Activated CD4-positive, alpha-beta T cell treated with anti-CD3 and anti-CD28 coated beads for 36 hours (primary cell): ENCODE measurements at regions of chr3 and their contacts with region 1.

Region 1: GRCh38 chr3:187974871-187975271 is 179.1 kb upstream of the LPP start:
- DNase-seq: no peak
- ATAC-seq: peak; percentile 61
- H3K4me3 Mint-ChIP-seq: peak overlapping the region; percentile 57
- H3K27ac Mint-ChIP-seq: peak overlapping the region; percentile 90
- H3K4me1 Mint-ChIP-seq: peaks cover 57% of the 10 kb centered on the region
- H3K27me3 Mint-ChIP-seq: no peaks in the 10 kb centered on the region

Region 2: DNA sequence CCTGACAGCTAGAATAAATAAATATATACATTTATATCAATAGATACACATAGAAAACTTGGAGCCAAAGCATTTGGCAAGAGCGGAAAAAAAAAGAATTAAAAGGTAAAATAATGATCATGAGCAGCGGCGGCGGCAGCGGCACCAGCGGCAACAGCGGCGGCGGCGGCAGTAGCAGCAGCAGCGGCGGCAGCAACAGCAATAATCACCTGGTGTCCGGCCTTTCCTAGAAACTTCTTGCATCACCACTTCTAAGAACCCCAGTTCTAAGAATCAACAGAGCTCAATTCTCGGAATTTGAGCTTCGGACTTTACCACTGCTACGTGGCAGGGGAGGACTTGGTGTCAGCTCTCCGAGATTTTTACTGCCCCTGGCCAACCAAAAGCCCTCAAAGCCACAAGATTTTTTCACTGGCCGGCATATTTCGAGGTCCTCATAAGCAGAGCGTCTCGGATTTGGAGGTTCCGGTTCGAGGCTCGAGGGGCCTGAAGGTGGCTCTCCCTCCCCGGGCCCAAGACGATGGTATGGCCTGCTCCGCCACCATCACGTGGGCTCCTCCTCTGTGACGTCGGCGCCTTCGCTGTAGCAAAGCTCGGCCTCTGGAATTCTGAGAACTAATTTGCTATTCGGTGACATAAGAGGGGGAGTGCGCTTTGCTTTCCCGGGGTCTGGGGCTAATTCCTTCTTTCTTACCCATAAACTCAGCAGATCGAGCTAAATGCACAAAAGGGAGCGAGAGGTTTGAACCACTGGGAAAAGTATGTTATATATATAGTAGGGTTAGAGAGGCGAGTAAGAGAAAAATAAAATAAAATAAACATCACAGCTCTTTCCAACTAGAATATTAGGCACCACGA is 229.4 kb before region 1 on chr3 and contains the start of gene BCL6:
- CTCF ChIA-PET with region 1: interaction called, 23 read pairs
- POLR2A ChIA-PET with region 1: interaction called, 15 read pairs
- intact Hi-C with region 1: loop called (anchors 1 to 2 kb)
- DNase-seq: peak; percentile 92
- ATAC-seq: peak; percentile 50
- H3K4me3 Mint-ChIP-seq: peak within 1 kb of the TSS; percentile 91
- H3K27ac Mint-ChIP-seq: peak within 1 kb of the TSS; percentile 99
- H3K4me1 Mint-ChIP-seq: peaks cover 63% of the 10 kb centered on the region
- H3K27me3 Mint-ChIP-seq: no peaks in the 10 kb centered on the region
- total RNA-seq, gene BCL6: 42.9 to 52.8 TPM

Region 3: DNA sequence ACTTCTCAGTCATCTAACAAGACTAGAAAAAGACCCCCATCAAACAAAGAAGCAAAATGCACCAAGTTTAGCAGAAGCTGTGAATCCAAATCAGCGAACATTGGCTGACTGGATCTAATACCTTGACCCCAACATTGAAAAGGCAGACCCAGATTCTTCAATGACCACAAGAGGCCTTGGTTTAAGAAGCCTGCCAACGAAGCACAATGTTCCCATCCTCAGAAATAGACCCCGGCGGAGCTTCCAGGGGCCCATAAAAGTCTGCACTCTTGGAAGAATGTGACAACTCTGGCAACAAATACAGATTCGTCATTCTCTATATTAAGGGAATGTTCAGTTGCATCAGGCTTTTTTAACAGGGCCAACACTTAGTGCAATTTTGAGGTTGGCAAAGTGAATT is 116.8 kb before region 1 on chr3:
- CTCF ChIA-PET with region 1: no interaction called
- POLR2A ChIA-PET with region 1: no interaction called
- intact Hi-C with region 1: no loop called
- DNase-seq: no peak
- ATAC-seq: no peak
- H3K4me3 Mint-ChIP-seq: no peak overlapping the region
- H3K27ac Mint-ChIP-seq: no peak overlapping the region
- H3K4me1 Mint-ChIP-seq: no peaks in the 10 kb centered on the region
- H3K27me3 Mint-ChIP-seq: peaks cover 2% of the 10 kb centered on the region

Region 4: GRCh38 chr3:187942658-187943241 is 32.1 kb before region 1 on chr3:
- CTCF ChIA-PET with region 1: interaction called, 13 read pairs
- POLR2A ChIA-PET with region 1: no interaction called
- intact Hi-C with region 1: no loop called
- DNase-seq: no peak
- ATAC-seq: no peak
- H3K4me3 Mint-ChIP-seq: no peak overlapping the region
- H3K27ac Mint-ChIP-seq: no peak overlapping the region
- H3K4me1 Mint-ChIP-seq: no peaks in the 10 kb centered on the region
- H3K27me3 Mint-ChIP-seq: peaks cover 3% of the 10 kb centered on the region

Region 5: GRCh38 chr3:188021502-188022040 is 46.7 kb after region 1 on chr3:
- CTCF ChIA-PET with region 1: no interaction called
- POLR2A ChIA-PET with region 1: no interaction called
- intact Hi-C with region 1: no loop called
- DNase-seq: no peak
- ATAC-seq: no peak
- H3K4me3 Mint-ChIP-seq: no peak overlapping the region
- H3K27ac Mint-ChIP-seq: no peak overlapping the region
- H3K4me1 Mint-ChIP-seq: no peaks in the 10 kb centered on the region
- H3K27me3 Mint-ChIP-seq: peaks cover 2% of the 10 kb centered on the region

Region 6: DNA sequence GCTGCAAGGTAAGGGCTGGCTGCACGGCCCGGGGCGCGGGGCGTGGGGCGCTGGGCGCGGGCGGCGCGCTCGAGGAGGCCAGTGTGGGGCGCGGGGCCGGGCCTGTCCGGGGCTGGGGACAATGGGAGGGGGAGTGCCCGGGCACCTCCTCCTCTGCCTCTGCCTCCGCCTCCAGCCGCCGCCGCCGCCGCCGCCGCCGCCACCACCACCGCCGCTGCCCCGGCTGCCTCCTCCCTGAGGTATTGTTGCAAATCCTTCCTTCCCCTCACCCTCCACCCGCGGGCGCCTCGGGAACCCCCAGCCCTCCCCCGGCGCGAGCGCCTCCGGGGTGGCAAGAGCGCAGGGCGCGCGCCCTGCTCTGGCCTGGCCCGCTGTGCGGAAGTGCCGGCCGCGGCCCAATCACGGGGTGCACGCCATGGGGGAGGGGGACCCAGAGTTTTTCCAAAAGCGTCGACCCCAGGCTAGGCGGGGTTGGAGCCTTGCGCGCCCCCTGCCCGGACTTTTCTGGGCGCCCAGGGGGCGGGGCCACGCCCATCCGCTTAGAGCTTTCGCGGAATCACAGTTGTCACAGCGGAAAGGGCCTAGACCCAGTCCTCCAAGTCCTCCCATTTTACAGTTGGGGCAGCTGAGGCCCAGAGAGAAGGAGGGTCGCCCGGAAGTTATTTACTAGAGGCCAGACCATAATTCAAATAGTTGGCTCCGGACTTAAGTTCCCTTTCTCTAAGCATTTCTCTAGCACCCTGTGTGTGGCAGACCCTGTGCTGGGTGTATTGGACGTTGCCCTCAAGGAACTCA is 179.3 kb after region 1 on chr3 and contains the start of gene LPP:
- CTCF ChIA-PET with region 1: no interaction called
- POLR2A ChIA-PET with region 1: interaction called, 9 read pairs
- intact Hi-C with region 1: loop called (anchors 1 to 5 kb)
- DNase-seq: peak; percentile 91
- ATAC-seq: peak; percentile 76
- H3K4me3 Mint-ChIP-seq: peak within 1 kb of the TSS; percentile 76
- H3K27ac Mint-ChIP-seq: peak within 1 kb of the TSS; percentile 95
- H3K4me1 Mint-ChIP-seq: peaks cover 64% of the 10 kb centered on the region
- H3K27me3 Mint-ChIP-seq: peaks cover 3% of the 10 kb centered on the region
- total RNA-seq, gene LPP: 34.7 to 40.6 TPM

Region 7: GRCh38 chr3:188286087-188286513 is 311.2 kb after region 1 on chr3:
- CTCF ChIA-PET with region 1: no interaction called
- POLR2A ChIA-PET with region 1: no interaction called
- intact Hi-C with region 1: loop called in 1 of 2 experiments (anchors 1 kb)
- DNase-seq: peak; percentile 29
- ATAC-seq: no peak
- H3K4me3 Mint-ChIP-seq: no peak overlapping the region
- H3K27ac Mint-ChIP-seq: peak overlapping the region; percentile 72
- H3K4me1 Mint-ChIP-seq: peaks cover 55% of the 10 kb centered on the region
- H3K27me3 Mint-ChIP-seq: no peaks in the 10 kb centered on the region

Region 8: DNA sequence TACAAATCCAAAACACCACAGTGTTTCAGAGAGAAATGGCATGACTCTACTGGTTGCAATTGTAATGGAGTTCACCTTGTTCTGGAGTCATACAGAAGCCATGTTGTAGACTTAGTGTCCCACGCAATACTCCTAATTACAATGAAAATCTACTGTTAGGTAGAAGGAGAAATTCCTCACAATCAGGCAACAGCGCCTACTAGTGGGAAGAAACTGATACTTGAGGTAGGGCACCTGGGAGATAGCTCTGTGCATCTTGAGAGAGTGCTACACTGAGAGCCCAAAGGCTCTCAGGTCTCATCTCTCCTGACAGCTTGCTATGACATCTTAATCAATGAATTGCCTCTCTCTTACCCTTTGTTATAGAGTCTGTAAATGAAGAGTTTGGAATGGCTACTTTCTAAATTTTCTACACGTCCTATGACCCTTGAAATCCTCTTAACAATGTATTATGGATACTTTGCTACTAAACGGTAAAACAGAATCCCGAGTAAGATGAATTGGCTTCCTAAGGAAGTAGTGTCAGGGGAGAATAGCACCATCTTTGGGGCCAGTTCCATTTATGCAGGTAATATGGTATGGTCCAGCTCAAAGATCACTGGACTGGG is 774.2 kb after region 1 on chr3:
- CTCF ChIA-PET with region 1: no interaction called
- POLR2A ChIA-PET with region 1: no interaction called
- intact Hi-C with region 1: loop called in 1 of 2 experiments (anchors 2 kb)
- DNase-seq: peak; percentile 59
- ATAC-seq: no peak
- H3K4me3 Mint-ChIP-seq: no peak overlapping the region
- H3K27ac Mint-ChIP-seq: no peak overlapping the region
- H3K4me1 Mint-ChIP-seq: peaks cover 30% of the 10 kb centered on the region
- H3K27me3 Mint-ChIP-seq: no peaks in the 10 kb centered on the region